ENCODE measurements at regions of chr12 and their contacts with region 1.

Region 1: GRCh38 chr12:30754709-30755394 is at the start of gene CAPRIN2:
- DNase-seq: peak; percentile 81 to 95 (median 90)
- H3K4me3 ChIP-seq: peak within 1 kb of the TSS; percentile 62 to 95 (median 84)
- H3K27ac ChIP-seq: peak within 1 kb of the TSS in 58 of 59 donors; percentile 58 to 97 (median 86)
- H3K27me3 ChIP-seq: no peaks in the 10 kb centered on the region
- CTCF ChIP-seq: peak in 53 of 56 donors; percentile 13 to 78 (median 50)
- total RNA-seq, gene CAPRIN2: 46.1 to 105 (median 75.4) TPM

Region 2: DNA sequence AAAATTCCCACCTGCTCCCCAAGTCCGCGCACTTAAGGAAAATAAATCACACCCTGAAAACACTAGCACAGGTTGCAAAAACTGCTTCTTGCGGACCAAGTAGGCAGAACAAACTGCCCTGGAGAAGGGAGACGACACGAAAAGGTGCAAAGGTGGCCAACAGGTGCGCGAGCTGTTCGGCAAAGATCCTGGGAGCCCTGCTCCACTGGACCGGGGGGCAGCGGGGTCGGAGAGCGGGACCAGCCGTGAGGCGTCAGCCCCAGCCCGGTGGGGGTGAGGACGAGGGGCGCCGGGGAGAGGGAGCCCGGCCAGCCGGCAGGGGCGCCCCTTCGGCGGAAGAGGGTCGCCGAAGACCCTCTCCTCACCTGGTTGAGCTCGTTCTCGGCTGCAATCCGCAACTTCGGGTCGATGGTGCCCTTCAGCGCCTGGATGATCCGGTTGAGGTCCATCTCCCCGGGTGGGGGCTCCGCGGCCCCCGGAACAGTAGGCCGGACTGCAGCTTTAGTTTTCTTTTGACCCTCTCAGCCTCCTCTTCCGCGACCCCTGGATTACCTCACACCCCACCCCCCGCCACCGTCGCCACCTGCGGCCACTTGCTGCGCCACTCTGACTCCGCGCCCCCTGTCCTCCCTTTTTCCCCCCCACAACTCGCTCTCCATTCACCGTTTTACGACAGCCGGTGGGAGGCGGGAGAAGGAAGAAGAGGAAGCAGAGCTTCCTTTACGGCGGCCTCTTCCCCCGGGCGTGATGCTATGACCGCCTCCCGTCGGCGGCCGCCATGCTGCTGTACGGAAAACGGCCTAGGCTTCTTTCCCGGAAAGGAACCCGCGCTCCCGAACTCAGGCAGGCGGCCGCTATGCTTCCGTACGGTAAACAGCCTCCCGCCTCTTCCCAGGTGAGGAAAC is 59.4 kb before region 1 on chr12 and contains the start of gene IPO8:
- intact Hi-C with region 1: loop called (anchors 1 kb)
- DNase-seq: peak; percentile 82 to 94 (median 92)
- H3K4me3 ChIP-seq: peak within 1 kb of the TSS; percentile 37 to 100 (median 95)
- H3K27ac ChIP-seq: peak within 1 kb of the TSS in 56 of 59 donors; percentile 19 to 92 (median 74)
- H3K27me3 ChIP-seq: no peaks in the 10 kb centered on the region
- CTCF ChIP-seq: peak in 28 of 56 donors; percentile 4 to 54 (median 24)
- total RNA-seq, gene IPO8: 32.8 to 62.2 (median 44.7) TPM

Region 3: DNA sequence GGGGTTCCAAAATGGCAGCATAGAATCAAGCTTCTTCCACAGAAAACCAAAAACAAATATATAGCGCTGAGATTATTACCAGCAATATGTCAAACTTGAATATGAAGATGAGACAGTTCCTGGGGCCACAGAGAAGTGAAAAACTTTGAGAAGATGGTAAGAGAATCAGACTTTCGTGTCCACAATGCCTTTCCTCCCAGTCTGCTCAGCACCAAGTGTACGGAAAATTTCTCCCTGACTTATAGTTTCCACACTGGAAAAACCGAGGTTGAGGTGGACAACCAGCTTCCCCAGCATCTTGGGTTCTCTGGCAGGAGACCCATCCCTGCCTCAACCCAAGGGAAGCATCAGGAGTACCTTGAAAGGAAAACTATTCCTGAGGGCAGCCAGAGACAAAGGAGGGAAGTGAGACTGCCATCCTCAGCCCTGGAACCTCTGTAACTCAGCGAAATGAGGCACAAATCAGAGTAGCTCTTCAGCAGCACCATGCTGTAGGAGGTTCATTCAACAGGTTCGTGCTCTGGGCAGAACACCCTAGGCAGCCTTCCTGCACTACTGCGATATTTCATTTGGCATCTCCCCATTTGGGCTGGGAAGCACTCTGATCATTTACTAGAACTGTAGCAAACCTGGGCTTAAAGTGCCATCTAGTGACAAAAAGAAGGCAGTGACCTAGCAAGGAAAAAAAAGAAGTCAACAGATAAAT is 52.3 kb after region 1 on chr12:
- intact Hi-C with region 1: loop called in 1 of 2 experiments (anchors 5 kb)
- DNase-seq: peak in 2 of 10 donors; percentile 35 to 45
- H3K4me3 ChIP-seq: no peak overlapping the region
- H3K27ac ChIP-seq: no peak overlapping the region
- H3K27me3 ChIP-seq: peaks cover 0 to 3% (median 0%) of the 10 kb centered on the region in 45 donors
- CTCF ChIP-seq: peak; percentile 45 to 82 (median 66)

Region 4: GRCh38 chr12:30822385-30823155 is 67.7 kb after region 1 on chr12:
- intact Hi-C with region 1: loop called in 1 of 2 experiments (anchors 10 kb)
- DNase-seq: peak; percentile 18 to 75 (median 54)
- H3K4me3 ChIP-seq: peak overlapping the region; percentile 29 to 75 (median 57)
- H3K27ac ChIP-seq: peak overlapping the region in 30 of 59 donors; percentile 7 to 90 (median 47)
- H3K27me3 ChIP-seq: peaks cover 0 to 22% (median 0%) of the 10 kb centered on the region in 45 donors
- CTCF ChIP-seq: peak in 34 of 56 donors; percentile 9 to 64 (median 32)

Region 5: DNA sequence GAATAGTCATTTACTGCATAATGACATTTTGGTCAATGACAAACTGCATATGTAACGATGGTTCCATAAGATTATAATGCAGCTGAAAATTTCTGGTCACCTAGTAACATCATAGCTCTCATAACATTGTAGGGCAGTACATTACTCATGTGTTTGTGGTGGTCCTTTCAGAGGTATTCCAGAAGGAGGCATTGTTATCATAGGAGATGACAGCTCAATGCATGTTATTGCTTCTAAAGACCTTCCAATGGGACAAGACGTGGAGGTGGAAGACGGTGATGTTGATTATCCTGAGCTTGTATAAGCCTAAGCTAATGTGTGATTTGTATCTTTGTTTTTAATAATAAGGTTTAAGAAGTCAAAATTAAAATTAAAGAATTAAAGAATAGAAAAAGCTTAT is 127.9 kb after region 1 on chr12:
- intact Hi-C with region 1: no loop called
- DNase-seq: no peak
- H3K4me3 ChIP-seq: no peak overlapping the region
- H3K27ac ChIP-seq: no peak overlapping the region
- H3K27me3 ChIP-seq: no peaks in the 10 kb centered on the region
- CTCF ChIP-seq: peak in 31 of 56 donors; percentile 14 to 68 (median 38)

Region 6: GRCh38 chr12:31117203-31118011 is 362.6 kb after region 1 on chr12:
- intact Hi-C with region 1: no loop called
- DNase-seq: no peak
- H3K4me3 ChIP-seq: peak overlapping the region in 53 of 59 donors; percentile 7 to 69 (median 46)
- H3K27ac ChIP-seq: no peak overlapping the region
- H3K27me3 ChIP-seq: peaks cover 0 to 56% (median 17%) of the 10 kb centered on the region in 45 donors
- CTCF ChIP-seq: peak in 48 of 56 donors; percentile 12 to 72 (median 38)

Region 7: DNA sequence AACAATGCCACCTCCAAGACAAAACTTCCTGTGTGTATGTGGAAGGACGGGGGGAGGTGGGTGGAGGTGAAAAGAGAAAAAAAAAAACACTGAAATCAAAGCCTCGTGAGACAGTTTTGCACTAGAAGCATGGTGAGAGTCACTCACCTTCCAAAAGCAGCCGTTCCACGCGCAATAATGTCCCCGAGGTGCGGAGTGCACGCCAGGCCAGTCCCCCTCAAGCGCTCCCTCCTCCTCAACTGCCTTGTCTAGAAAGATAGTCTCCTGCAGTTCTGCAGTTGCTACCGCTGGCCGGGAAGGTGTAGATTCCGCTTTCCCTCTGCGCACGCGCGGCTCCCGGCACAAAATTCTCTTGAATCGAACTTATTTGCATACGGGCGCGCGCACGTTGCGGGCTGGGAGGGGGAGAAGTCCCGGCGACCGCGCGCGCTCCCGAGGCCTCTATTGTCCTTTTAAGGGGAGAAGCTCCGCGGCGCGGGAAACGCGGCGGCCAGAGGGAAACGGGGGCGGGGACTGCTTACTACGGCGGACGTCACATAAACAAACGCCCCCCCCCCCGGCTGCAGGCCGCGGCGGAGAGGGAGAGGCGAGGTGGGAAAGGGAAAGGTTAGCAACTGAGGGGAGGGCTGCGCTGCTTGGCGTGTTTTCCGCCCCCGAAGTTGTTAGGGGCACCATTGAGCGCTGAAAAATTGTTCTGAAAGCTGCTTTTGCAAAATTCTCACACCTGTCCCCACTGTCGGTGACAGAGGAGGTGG is 571.2 kb after region 1 on chr12 and contains the start of gene SINHCAF:
- intact Hi-C with region 1: loop called in 1 of 2 experiments (anchors 10 kb)
- DNase-seq: peak; percentile 95 to 99 (median 98)
- H3K4me3 ChIP-seq: peak within 1 kb of the TSS; percentile 34 to 89 (median 73)
- H3K27ac ChIP-seq: peak within 1 kb of the TSS in 53 of 59 donors; percentile 18 to 86 (median 68)
- H3K27me3 ChIP-seq: peaks cover 0 to 34% (median 9%) of the 10 kb centered on the region in 45 donors
- CTCF ChIP-seq: peak in 20 of 56 donors; percentile 9 to 56 (median 28)
- total RNA-seq, gene SINHCAF: 0.70 to 9.0 (median 3.2) TPM

Measured in dorsolateral prefrontal cortex (tissue), 120 donors.